Activated naive CD8-positive, alpha-beta T cell treated with anti-CD3 and anti-CD28 coated beads, Interleukin-2, amount 10 ng/mL, durations not matched to agents 7 days and 5 days (primary cell): ENCODE measurements at regions of chr12 and their contacts with region 1.

Region 1: DNA sequence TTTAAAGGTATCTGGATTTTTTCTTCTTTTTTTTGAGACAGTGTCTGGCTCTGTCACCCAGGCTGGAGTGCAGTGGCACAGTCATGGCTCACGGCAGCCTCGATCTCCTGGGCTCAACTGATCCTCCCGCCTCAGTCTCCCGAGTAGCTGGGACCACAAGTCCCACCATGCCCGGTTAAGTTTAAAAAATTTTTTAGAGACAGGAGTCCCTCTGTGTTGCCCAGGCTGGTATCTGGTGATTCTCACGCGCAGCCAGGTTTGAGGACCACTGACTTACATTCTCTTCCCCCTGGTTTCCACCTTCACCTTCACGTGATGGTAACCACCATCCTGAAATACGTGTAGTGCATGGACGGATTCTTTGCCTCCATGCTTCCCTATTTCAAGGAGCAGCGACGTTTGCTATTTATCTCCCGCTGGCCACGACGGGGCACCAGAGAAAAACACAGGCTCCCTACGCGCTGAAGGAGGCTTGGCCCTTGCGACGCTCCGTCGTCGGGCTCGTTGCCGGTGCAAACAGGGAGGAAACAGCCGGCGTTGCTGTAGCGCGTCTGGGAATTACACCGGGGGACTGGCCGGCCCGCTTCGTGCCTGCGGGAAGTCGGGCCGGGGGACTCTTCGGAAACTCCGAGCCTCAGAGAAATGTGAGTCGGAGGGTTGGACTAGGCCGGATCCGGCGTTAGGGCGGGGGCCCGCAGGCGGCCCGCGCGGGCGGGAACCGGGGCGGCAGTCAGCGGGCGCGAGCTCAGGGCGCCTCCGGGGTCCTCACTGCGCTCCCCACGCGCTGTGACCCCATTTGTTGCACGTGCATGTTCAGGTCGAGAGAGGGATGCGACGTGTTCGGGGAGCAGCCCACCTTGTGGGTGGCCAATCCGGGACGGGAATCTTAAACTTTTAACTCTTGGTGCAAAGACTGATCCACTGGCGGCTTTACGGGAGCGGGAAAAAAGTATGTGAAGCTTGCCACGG is at the start of gene TCHP:
- DNase-seq: peak; percentile 80
- ATAC-seq: peak; percentile 87
- H3K4me3 Mint-ChIP-seq: peak within 1 kb of the TSS; percentile 92
- H3K27ac Mint-ChIP-seq: peak within 1 kb of the TSS; percentile 96
- H3K4me1 Mint-ChIP-seq: peaks cover 17% of the 10 kb centered on the region
- H3K27me3 Mint-ChIP-seq: no peaks in the 10 kb centered on the region
- total RNA-seq, gene TCHP: 34.4 to 37.2 TPM

Region 2: DNA sequence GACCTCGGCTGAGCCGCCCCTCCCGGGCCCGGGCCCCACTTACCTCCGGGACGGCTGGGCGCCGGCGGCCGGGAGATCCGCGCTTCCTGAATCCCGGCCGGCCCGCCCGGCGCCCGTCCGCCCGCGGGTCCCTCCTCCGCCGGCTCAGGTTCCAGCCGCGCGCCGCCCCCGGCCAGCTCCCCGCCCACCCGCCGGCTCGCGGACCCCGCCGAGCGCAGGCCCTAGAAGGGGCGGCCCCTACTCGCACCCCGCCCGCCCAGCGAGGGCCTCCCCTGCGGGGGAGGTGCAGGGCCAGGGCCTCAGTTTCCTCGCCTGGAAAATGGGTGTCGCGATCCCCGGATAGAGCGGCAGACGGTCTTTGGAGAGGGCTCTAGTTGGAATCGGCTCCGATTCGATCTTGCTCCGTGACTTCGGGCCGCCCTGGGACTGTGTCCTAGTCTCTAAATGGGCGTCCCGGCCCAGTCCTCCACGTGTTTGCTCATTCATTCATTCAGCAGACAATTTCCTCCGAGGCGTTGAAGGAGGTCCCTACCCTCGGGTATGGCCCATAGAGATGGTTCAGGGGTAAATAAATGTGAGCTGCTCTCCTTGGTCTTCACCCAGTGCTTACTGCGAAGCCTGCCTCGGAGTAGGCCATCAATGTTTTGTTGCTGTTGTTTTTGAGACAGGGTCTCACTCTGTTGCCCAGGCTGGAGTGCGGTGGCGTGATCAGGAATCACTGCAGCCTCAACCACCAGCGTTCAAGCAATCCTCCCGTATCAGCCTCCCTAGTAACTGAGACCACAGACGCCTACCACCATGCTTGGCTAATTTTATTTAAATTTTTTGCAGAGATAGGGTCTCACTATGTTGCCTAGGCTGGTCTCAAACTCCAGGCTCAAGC is 66.5 kb before region 1 on chr12 and contains the start of gene TRPV4:
- POLR2A ChIA-PET with region 1: no interaction called
- DNase-seq: no peak
- ATAC-seq: no peak
- H3K4me3 Mint-ChIP-seq: peak within 1 kb of the TSS; percentile 16
- H3K27ac Mint-ChIP-seq: no peak within 1 kb of the TSS
- H3K4me1 Mint-ChIP-seq: peaks cover 3% of the 10 kb centered on the region
- H3K27me3 Mint-ChIP-seq: peaks cover 42% of the 10 kb centered on the region
- total RNA-seq, gene TRPV4: not detected

Region 3: GRCh38 chr12:109861689-109862314 is 38.3 kb before region 1 on chr12:
- POLR2A ChIA-PET with region 1: no interaction called
- DNase-seq: no peak
- ATAC-seq: no peak
- H3K4me3 Mint-ChIP-seq: no peak overlapping the region
- H3K27ac Mint-ChIP-seq: no peak overlapping the region
- H3K4me1 Mint-ChIP-seq: peaks cover 22% of the 10 kb centered on the region
- H3K27me3 Mint-ChIP-seq: no peaks in the 10 kb centered on the region

Region 4: DNA sequence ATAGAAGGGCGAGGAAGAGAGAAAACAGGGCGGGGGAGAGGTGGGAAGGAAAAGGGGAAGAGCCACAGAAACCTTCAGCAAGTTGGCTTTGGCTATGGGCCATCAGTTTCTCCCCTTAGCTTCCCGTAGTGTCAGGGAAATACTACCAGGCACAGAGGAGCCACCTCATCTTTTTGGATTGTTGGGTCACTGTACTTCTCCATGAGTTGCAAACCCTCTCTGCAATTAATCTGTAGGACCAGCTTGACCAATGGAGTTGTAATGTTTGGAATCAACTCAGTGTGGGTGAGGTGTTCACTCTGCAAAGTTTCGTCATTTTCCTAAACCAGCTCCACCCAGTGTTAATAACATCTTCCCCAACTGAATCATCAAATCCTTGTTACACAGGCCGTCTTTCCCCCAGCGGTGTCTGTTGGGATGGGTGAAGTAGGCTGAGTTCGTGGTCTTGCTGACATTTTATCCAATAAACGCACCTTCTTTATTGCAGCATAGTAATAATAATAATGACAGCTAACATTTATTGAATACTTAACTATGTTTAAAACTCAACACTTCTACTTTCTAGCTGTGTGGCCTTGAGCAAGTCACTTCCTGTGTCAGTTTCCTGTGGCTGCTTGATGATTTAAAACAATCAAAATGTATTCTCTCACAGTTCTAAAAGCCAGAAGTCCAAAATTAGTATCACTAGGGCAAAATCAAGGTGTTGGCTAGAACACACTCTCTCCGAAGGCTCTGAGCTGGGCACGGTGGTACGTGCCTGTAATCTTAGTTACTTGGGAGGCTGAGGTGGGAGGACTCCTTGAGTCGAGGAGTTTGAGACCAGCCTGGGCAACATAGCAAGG is 11.7 kb before region 1 on chr12:
- POLR2A ChIA-PET with region 1: interaction called, 20 read pairs
- DNase-seq: no peak
- ATAC-seq: peak; percentile 60
- H3K4me3 Mint-ChIP-seq: peak overlapping the region; percentile 37
- H3K27ac Mint-ChIP-seq: peak overlapping the region; percentile 95
- H3K4me1 Mint-ChIP-seq: peaks cover 36% of the 10 kb centered on the region
- H3K27me3 Mint-ChIP-seq: peaks cover 12% of the 10 kb centered on the region